ENCODE measurements at regions of chr22 and their contacts with region 1.

Region 1: GRCh38 chr22:24325105-24325757 is 54.6 kb downstream of the SPECC1L start:
- DNase-seq: peak; percentile 71
- ATAC-seq: peak; percentile 76
- H3K4me3 ChIP-seq: no peak overlapping the region
- H3K4me3 Mint-ChIP-seq: no peak overlapping the region
- H3K27ac ChIP-seq: no peak overlapping the region
- H3K27ac Mint-ChIP-seq: peak overlapping the region; percentile 26
- H3K4me1 ChIP-seq: peaks cover 7 to 8% of the 10 kb centered on the region in 2 donors
- H3K4me1 Mint-ChIP-seq: peaks cover 19% of the 10 kb centered on the region
- H3K27me3 ChIP-seq: no peaks in the 10 kb centered on the region
- H3K27me3 Mint-ChIP-seq: no peaks in the 10 kb centered on the region
- CTCF ChIP-seq: peak; percentile 85

Region 2: DNA sequence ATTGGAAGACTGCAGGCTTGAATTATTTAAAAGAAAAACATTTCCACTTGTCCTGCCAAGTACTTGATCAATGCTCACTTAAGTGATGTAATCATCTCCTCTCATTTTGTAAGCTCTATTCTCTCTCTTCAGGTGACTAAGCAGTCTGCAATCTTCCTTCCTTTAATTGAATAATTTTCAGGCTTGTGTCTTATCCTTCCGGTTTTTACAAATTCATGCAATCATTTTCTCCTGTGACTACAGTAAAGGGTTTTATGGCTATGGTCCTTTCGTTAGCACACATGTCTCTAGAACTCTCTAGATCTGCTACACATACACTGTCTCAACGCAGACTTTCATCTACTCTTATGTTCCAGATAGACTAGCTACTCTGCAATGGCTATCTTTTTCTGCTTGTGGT is 157.3 kb after region 1 on chr22:
- CTCF ChIA-PET with region 1: interaction called, 3 read pairs
- POLR2A ChIA-PET with region 1: no interaction called
- intact Hi-C with region 1: loop called (anchors 1 kb)
- DNase-seq: no peak
- ATAC-seq: no peak
- H3K4me3 ChIP-seq: no peak overlapping the region
- H3K4me3 Mint-ChIP-seq: no peak overlapping the region
- H3K27ac ChIP-seq: no peak overlapping the region
- H3K27ac Mint-ChIP-seq: no peak overlapping the region
- H3K4me1 ChIP-seq: no peaks in the 10 kb centered on the region
- H3K4me1 Mint-ChIP-seq: peaks cover 10% of the 10 kb centered on the region
- H3K27me3 ChIP-seq: no peaks in the 10 kb centered on the region
- H3K27me3 Mint-ChIP-seq: peaks cover 5% of the 10 kb centered on the region
- CTCF ChIP-seq: no peak